Activated CD4-positive, alpha-beta memory T cell treated with anti-CD3 and anti-CD28 coated beads, Interleukin-2, amount 10 ng/mL, durations not matched to agents 7 days and 5 days (primary cell): ENCODE measurements at regions of chr17 and their contacts with region 1.

Region 1: DNA sequence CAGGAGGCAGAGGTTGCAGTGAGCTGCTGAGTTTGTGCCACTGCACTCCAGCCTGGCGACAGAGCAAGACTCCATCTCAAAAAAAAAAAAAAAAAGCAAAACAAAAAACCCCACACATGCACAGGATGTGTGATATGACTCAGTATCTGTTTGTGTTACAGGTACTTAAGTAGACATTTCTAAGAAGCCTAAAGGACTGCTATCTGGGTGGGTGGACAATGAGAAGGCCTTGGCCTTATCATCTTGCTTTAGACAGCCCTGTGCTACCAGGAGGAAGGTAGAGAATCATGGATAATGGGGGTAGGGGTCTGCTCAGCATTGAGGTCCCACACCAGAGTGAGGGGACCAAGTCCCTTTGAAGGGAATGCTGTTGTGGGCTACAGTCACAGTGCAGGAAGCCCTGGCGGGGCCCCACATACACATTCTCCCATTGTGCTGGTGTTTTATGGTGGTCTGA is 26.7 kb downstream of the PLD6 start:
- DNase-seq: peak; percentile 41
- H3K4me3 Mint-ChIP-seq: peak overlapping the region; percentile 75
- H3K27ac Mint-ChIP-seq: peak overlapping the region; percentile 97
- H3K4me1 Mint-ChIP-seq: peaks cover 91% of the 10 kb centered on the region
- H3K27me3 Mint-ChIP-seq: no peaks in the 10 kb centered on the region

Region 2: DNA sequence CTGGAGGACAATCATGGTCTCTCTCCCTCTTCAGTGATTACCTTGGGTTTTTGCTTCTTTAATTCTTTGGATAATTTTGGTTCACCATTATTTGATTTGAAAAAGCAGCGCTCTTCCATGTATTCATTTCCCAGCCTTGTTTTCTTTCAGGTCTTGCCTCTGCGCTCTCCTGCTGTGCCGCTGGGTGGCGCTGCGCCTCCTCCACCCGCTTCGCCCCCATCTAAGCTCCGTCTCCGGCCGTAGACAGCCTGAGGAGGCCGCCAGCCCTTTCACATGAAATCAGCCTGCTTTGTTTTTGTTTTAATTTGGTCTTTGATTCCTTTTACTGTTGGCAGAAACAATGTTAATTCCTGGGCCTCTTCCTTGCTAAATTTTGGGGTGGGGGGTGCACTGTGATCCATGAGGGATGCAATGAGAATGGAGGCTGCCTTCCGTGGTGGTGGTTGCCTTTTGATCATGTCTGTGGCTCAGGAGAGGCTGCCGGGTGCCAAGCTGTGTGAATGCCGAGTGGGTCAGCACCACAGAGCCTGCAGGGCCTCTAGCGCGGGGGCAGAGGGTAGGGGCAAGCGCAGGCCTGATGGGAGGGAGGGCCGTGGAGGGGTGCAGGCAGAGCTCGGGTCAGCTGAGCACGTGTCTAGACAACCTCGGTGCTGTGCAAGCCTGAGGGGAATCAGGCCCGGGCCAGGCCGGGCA is 37.4 kb before region 1 on chr17:
- CTCF ChIA-PET with region 1: interaction called, 10 read pairs
- POLR2A ChIA-PET with region 1: interaction called, 5 read pairs
- DNase-seq: peak; percentile 62
- H3K4me3 Mint-ChIP-seq: no peak overlapping the region
- H3K27ac Mint-ChIP-seq: peak overlapping the region; percentile 66
- H3K4me1 Mint-ChIP-seq: peaks cover 7% of the 10 kb centered on the region
- H3K27me3 Mint-ChIP-seq: no peaks in the 10 kb centered on the region

Region 3: GRCh38 chr17:17151962-17152361 is 27.4 kb before region 1 on chr17:
- CTCF ChIA-PET with region 1: interaction called, 4 read pairs
- POLR2A ChIA-PET with region 1: interaction called, 15 read pairs
- DNase-seq: peak; percentile 45
- H3K4me3 Mint-ChIP-seq: no peak overlapping the region
- H3K27ac Mint-ChIP-seq: peak overlapping the region; percentile 59
- H3K4me1 Mint-ChIP-seq: peaks cover 61% of the 10 kb centered on the region
- H3K27me3 Mint-ChIP-seq: no peaks in the 10 kb centered on the region

Region 4: GRCh38 chr17:17206124-17206912 is 26.9 kb after region 1 on chr17 and contains the start of gene PLD6:
- CTCF ChIA-PET with region 1: interaction called, 3 read pairs
- POLR2A ChIA-PET with region 1: interaction called, 45 read pairs
- DNase-seq: peak; percentile 90
- H3K4me3 Mint-ChIP-seq: peak within 1 kb of the TSS; percentile 83
- H3K27ac Mint-ChIP-seq: peak within 1 kb of the TSS; percentile 73
- H3K4me1 Mint-ChIP-seq: peaks cover 31% of the 10 kb centered on the region
- H3K27me3 Mint-ChIP-seq: no peaks in the 10 kb centered on the region
- total RNA-seq, gene PLD6: 6.3 to 6.6 TPM

Region 5: GRCh38 chr17:17237026-17237799 is 57.8 kb after region 1 on chr17 and contains the start of gene FLCN:
- CTCF ChIA-PET with region 1: interaction called, 3 read pairs
- POLR2A ChIA-PET with region 1: interaction called, 14 read pairs
- DNase-seq: peak; percentile 89
- H3K4me3 Mint-ChIP-seq: peak within 1 kb of the TSS; percentile 96
- H3K27ac Mint-ChIP-seq: peak within 1 kb of the TSS; percentile 91
- H3K4me1 Mint-ChIP-seq: peaks cover 37% of the 10 kb centered on the region
- H3K27me3 Mint-ChIP-seq: no peaks in the 10 kb centered on the region
- total RNA-seq, gene FLCN: 48.8 to 53.1 TPM